ENCODE measurements at regions of chr7 and their contacts with region 1.

Region 1: GRCh38 chr7:152709287-152710152 is 33.6 kb upstream of the XRCC2 start:
- DNase-seq: no peak
- H3K4me3 ChIP-seq: no peak overlapping the region
- H3K4me3 Mint-ChIP-seq: no peak overlapping the region
- H3K27ac ChIP-seq: no peak overlapping the region
- H3K27ac Mint-ChIP-seq: no peak overlapping the region
- H3K4me1 ChIP-seq: no peaks in the 10 kb centered on the region
- H3K4me1 Mint-ChIP-seq: peaks cover 0 to 6% (median 4%) of the 10 kb centered on the region in 4 donors
- H3K27me3 ChIP-seq: no peaks in the 10 kb centered on the region
- H3K27me3 Mint-ChIP-seq: peaks cover 0 to 7% of the 10 kb centered on the region in 2 donors

Region 2: DNA sequence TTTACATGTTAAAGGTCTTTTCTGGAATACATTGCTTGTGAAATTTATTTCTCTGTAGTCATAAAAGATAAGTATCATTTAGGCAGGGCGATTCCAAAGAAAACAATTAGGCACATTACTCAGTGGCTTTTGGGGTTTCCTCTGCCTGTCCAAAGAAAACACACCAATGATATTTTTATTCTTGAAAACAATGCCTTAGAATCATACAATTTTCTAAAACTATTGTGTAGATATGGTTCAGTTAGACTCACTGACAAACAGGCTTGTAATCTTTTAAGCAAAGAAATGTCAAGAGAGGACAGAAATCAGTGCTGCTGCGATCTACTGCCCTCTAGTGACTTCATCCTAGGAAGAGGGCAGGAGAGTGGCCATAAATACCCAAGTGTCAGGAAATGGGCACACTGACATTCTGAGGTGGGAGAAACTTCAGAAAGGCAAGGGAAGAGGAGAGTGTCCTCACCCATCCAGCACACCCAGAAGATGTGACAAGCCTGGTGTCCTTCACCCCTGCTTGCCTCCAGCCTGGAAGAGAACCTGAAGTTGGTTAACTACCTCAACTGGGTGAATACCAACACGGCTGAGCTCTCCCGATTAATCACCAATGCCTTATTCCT is 563.6 kb before region 1 on chr7:
- CTCF ChIA-PET with region 1: no interaction called
- POLR2A ChIA-PET with region 1: no interaction called
- intact Hi-C with region 1: loop called (anchors 5 kb)
- DNase-seq: peak in 4 of 5 donors; percentile 41 to 45 (median 44)
- H3K4me3 ChIP-seq: peak overlapping the region in 1 of 2 donors; percentile 2
- H3K4me3 Mint-ChIP-seq: peak overlapping the region in 6 of 8 donors; percentile 46 to 83 (median 72)
- H3K27ac ChIP-seq: no peak overlapping the region
- H3K27ac Mint-ChIP-seq: peak overlapping the region; percentile 48 to 95 (median 89)
- H3K4me1 ChIP-seq: peaks cover 47% of the 10 kb centered on the region
- H3K4me1 Mint-ChIP-seq: peaks cover 38 to 48% (median 42%) of the 10 kb centered on the region in 4 donors
- H3K27me3 ChIP-seq: no peaks in the 10 kb centered on the region
- H3K27me3 Mint-ChIP-seq: no peaks in the 10 kb centered on the region

Region 3: DNA sequence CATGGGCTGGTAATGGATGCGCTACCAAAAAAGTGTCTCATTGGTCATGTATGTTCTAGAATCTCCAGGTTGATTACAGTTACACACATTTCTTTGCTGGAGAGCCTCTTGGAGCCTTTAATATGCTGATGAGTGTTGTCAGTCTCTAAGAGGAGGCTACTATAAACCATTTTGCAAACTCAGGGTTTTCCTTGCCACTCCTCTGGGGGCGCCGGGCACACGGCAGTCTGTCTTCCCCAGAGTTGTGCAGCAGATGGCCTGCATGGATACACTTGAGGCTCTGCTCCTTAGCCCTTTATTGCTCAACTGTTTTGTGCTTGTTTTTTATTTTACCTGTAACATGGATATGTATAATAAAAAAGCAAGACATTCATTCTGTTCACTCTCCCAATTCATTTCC is 246.5 kb after region 1 on chr7:
- CTCF ChIA-PET with region 1: no interaction called
- POLR2A ChIA-PET with region 1: no interaction called
- intact Hi-C with region 1: no loop called
- DNase-seq: no peak
- H3K4me3 ChIP-seq: no peak overlapping the region
- H3K4me3 Mint-ChIP-seq: no peak overlapping the region
- H3K27ac ChIP-seq: no peak overlapping the region
- H3K27ac Mint-ChIP-seq: no peak overlapping the region
- H3K4me1 ChIP-seq: no peaks in the 10 kb centered on the region
- H3K4me1 Mint-ChIP-seq: no peaks in the 10 kb centered on the region
- H3K27me3 ChIP-seq: no peaks in the 10 kb centered on the region
- H3K27me3 Mint-ChIP-seq: peaks cover 0 to 2% of the 10 kb centered on the region in 2 donors

Measured in CD4-positive, alpha-beta memory T cell (primary cell).